Naive thymus-derived CD4-positive, alpha-beta T cell (primary cell): ENCODE measurements at regions of chr3 and their contacts with region 1.

Region 1: GRCh38 chr3:121654493-121655385 is 6.0 kb downstream of the HCLS1 start:
- DNase-seq: peak in 4 of 9 donors; percentile 5 to 22 (median 16)
- ATAC-seq: peak; percentile 62
- H3K4me3 ChIP-seq: peak overlapping the region; percentile 24
- H3K4me3 Mint-ChIP-seq: peak overlapping the region; percentile 8 to 81 (median 54)
- H3K27ac ChIP-seq: peak overlapping the region; percentile 11
- H3K27ac Mint-ChIP-seq: peak overlapping the region; percentile 70 to 93 (median 85)
- H3K4me1 ChIP-seq: peaks cover 46 to 61% of the 10 kb centered on the region in 2 donors
- H3K4me1 Mint-ChIP-seq: peaks cover 66 to 93% (median 83%) of the 10 kb centered on the region in 7 donors
- H3K27me3 ChIP-seq: no peaks in the 10 kb centered on the region
- H3K27me3 Mint-ChIP-seq: no peaks in the 10 kb centered on the region

Region 2: DNA sequence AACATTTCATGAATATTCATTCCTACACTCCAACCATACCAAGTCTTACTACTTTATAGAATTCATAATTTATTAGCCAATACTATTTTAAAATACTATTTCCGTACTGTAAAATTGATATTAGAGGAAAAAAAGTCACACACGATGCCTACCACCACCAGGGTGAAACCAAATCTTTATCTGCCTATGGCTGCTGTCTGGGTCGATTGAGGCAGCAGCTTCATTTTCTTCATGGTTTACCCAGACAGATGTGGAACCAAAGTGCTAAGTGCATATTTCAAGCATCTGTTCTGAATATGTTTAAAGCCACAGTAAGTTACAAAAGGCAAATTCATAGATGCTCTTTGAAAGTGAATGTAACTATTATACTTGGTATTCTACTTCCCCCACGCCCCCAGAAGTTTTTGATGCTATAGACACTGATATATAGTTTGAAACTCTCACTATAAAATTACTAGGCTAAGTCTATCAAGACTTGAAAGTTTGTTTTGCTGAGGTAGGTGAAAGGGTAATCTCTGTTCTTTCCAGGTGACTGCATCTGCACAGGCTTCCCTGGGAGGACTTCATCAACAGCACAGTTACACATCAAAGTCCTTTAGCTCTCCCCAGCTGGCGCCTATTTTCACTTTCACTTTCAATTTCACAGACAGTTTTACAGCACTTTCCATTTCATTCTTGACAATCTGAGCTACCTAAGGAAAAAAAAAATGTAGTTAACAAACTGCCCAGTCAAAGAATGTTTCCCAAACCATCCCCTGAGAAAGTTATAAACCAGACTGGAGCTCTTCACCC is 222.8 kb before region 1 on chr3:
- CTCF ChIA-PET with region 1: no interaction called
- POLR2A ChIA-PET with region 1: no interaction called
- intact Hi-C with region 1: loop called in 1 of 2 experiments (anchors 10 kb)
- DNase-seq: peak in 8 of 9 donors; percentile 36 to 80 (median 74)
- ATAC-seq: peak; percentile 89
- H3K4me3 ChIP-seq: peak overlapping the region; percentile 52
- H3K4me3 Mint-ChIP-seq: peak overlapping the region; percentile 46 to 84 (median 76)
- H3K27ac ChIP-seq: peak overlapping the region; percentile 33
- H3K27ac Mint-ChIP-seq: peak overlapping the region; percentile 48 to 92 (median 84)
- H3K4me1 ChIP-seq: peaks cover 0 to 9% of the 10 kb centered on the region in 2 donors
- H3K4me1 Mint-ChIP-seq: peaks cover 6 to 31% (median 24%) of the 10 kb centered on the region in 7 donors
- H3K27me3 ChIP-seq: no peaks in the 10 kb centered on the region
- H3K27me3 Mint-ChIP-seq: no peaks in the 10 kb centered on the region

Region 3: DNA sequence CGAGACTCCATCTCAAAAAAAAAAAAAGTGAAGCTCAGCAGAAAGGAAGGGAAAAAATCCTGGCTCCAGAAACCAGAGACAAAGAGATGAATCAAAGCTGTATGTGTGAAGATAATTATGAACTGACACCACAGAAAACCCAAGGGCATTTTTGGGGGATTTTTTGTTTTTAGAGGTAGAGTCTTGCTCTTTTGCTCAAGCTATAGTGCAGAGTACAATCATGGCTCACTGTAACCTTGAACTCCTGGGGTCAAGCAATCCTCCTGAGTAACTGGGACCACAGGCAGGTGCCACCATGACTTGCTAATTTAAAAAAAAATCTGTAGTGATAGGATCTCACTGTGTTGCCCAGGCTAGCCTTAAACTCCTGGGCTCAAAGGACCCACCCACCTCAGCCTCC is 16.8 kb before region 1 on chr3:
- CTCF ChIA-PET with region 1: no interaction called
- POLR2A ChIA-PET with region 1: no interaction called
- intact Hi-C with region 1: loop called in 1 of 2 experiments (anchors 2 kb)
- DNase-seq: no peak
- ATAC-seq: no peak
- H3K4me3 ChIP-seq: no peak overlapping the region
- H3K4me3 Mint-ChIP-seq: no peak overlapping the region
- H3K27ac ChIP-seq: no peak overlapping the region
- H3K27ac Mint-ChIP-seq: peak overlapping the region in 7 of 9 donors; percentile 38 to 74 (median 62)
- H3K4me1 ChIP-seq: no peaks in the 10 kb centered on the region
- H3K4me1 Mint-ChIP-seq: peaks cover 11 to 21% (median 17%) of the 10 kb centered on the region in 7 donors
- H3K27me3 ChIP-seq: no peaks in the 10 kb centered on the region
- H3K27me3 Mint-ChIP-seq: no peaks in the 10 kb centered on the region

Region 4: DNA sequence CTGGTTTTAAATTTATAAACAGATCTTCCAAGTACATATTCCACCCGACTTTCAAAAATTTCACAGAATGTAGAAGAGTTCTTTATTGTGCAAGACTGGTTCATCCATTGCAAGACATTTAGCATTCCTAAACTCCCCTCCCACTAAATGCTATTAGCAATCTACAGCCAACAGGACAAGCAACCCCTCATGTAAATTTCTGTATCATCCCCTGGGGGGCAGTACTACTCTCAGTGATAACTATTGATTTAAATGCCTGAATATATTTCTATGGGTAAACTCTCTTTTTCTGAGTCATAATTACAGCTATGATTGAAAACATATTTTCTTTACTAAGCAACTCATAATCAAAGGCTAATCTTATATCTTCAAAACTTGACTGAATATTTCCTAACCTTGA is 228.8 kb after region 1 on chr3:
- CTCF ChIA-PET with region 1: no interaction called
- POLR2A ChIA-PET with region 1: no interaction called
- intact Hi-C with region 1: no loop called
- DNase-seq: no peak
- ATAC-seq: no peak
- H3K4me3 ChIP-seq: no peak overlapping the region
- H3K4me3 Mint-ChIP-seq: no peak overlapping the region
- H3K27ac ChIP-seq: no peak overlapping the region
- H3K27ac Mint-ChIP-seq: no peak overlapping the region
- H3K4me1 ChIP-seq: no peaks in the 10 kb centered on the region
- H3K4me1 Mint-ChIP-seq: no peaks in the 10 kb centered on the region
- H3K27me3 ChIP-seq: no peaks in the 10 kb centered on the region
- H3K27me3 Mint-ChIP-seq: no peaks in the 10 kb centered on the region